Psoas muscle (tissue), 8 donors: ENCODE measurements at regions of chr3 and their contacts with region 1.

Region 1: GRCh38 chr3:128787256-128788240 is 61.6 kb downstream of the RAB7A start:
- DNase-seq: no peak
- ATAC-seq: peak; percentile 48 to 56 (median 54)
- H3K4me3 ChIP-seq: no peak overlapping the region
- H3K27ac ChIP-seq: peak overlapping the region; percentile 84
- H3K4me1 ChIP-seq: peaks cover 79% of the 10 kb centered on the region
- H3K27me3 ChIP-seq: no peaks in the 10 kb centered on the region
- CTCF ChIP-seq: peak; percentile 33

Region 2: DNA sequence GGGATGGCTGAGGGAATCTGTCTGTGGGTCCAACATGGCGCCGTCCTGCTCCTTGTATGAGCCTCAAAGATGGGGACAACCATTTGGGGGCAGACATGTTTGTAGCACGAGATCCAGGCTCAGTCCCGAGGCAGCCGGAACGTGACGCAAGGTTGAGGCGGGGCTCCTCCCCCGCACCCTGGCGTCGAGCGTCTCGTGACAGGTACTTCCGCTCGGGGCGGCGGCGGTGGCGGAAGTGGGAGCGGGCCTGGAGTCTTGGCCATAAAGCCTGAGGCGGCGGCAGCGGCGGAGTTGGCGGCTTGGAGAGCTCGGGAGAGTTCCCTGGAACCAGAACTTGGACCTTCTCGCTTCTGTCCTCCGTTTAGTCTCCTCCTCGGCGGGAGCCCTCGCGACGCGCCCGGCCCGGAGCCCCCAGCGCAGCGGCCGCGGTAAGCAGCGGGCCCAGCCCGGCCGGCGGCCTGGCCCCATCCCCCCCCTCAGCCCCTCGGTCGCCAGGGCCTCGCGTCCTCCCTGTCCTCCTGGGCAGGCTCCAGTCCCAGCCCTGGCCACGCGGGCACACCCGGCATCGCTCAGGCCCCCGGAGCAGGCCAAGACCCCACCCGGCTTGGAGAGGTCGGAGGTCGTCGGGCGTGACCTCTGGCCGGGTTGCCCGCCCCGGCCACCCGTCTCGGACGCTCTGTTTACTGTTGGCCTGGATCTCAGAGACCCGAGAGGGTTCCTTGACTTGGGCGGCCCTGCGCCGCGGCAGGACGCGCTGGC is 61.4 kb before region 1 on chr3 and contains the start of gene RAB7A:
- intact Hi-C with region 1: loop called (anchors 5 kb)
- DNase-seq: peak; percentile 98 to 99
- ATAC-seq: peak; percentile 93 to 98 (median 97)
- H3K4me3 ChIP-seq: peak within 1 kb of the TSS; percentile 98
- H3K27ac ChIP-seq: peak within 1 kb of the TSS; percentile 100
- H3K4me1 ChIP-seq: peaks cover 34% of the 10 kb centered on the region
- H3K27me3 ChIP-seq: no peaks in the 10 kb centered on the region
- CTCF ChIP-seq: no peak
- total RNA-seq, gene RAB7A: 232 to 375 (median 284) TPM

Region 3: DNA sequence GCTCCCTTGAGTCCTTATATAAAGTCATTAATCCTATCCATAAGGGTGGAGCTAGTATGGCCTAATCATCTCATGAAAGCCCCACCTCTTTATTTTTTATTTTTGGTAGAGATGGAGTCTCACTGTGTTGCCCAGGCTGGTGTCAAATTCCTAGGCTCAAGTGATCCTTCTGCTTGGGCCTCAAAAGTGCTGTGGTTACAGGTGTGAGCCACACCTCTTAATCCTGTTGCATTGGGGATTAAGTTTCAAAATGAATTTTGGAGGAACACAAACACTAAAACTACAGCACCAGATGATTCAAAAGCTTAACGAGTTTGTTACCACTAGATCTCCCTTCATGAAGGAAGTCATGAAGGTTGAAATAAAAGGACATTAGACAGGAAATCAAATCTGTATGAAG is 33.8 kb before region 1 on chr3:
- intact Hi-C with region 1: no loop called
- DNase-seq: no peak
- ATAC-seq: peak in 2 of 4 donors; percentile 38 to 62
- H3K4me3 ChIP-seq: no peak overlapping the region
- H3K27ac ChIP-seq: peak overlapping the region; percentile 38
- H3K4me1 ChIP-seq: peaks cover 64% of the 10 kb centered on the region
- H3K27me3 ChIP-seq: no peaks in the 10 kb centered on the region
- CTCF ChIP-seq: no peak

Region 4: DNA sequence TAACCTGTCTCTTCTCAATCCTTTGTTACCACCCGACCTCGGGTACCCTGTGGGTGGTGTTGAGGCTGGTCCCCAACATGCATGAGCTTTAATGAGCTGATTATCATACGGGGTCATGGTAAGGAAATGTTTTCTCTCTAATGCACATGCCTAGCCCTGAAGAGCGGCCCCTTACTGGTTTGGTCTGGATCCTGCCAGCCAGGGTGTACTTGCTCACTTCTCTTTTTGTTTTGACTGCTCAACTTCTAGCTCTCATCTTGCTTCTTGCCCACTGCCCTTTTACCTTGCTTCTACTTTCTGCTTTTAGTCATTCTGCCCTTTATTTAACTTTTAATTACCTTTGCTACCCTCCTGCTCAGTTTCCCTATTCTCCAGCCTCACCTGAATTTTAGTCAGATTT is 47.5 kb after region 1 on chr3:
- intact Hi-C with region 1: no loop called
- DNase-seq: no peak
- ATAC-seq: no peak
- H3K4me3 ChIP-seq: no peak overlapping the region
- H3K27ac ChIP-seq: no peak overlapping the region
- H3K4me1 ChIP-seq: no peaks in the 10 kb centered on the region
- H3K27me3 ChIP-seq: no peaks in the 10 kb centered on the region
- CTCF ChIP-seq: no peak